GM12878 (cell line): ENCODE measurements at regions of chr12 and their contacts with region 1.

Region 1: GRCh38 chr12:40446385-40446784 is 221.6 kb downstream of the LRRK2 start:
- DNase-seq: no peak
- ATAC-seq: peak; percentile 76
- H3K4me3 ChIP-seq: no peak overlapping the region
- H3K27ac ChIP-seq: no peak overlapping the region
- H3K4me1 ChIP-seq: no peaks in the 10 kb centered on the region
- H3K27me3 ChIP-seq: no peaks in the 10 kb centered on the region
- CTCF ChIP-seq: peak; percentile 44 to 57 (median 48); a peak in 4 of 6 replicates
- EP300 ChIP-seq: no peak
- POLR2A ChIP-seq: no peak
- RAD21 ChIP-seq: peak; percentile 60

Region 2: DNA sequence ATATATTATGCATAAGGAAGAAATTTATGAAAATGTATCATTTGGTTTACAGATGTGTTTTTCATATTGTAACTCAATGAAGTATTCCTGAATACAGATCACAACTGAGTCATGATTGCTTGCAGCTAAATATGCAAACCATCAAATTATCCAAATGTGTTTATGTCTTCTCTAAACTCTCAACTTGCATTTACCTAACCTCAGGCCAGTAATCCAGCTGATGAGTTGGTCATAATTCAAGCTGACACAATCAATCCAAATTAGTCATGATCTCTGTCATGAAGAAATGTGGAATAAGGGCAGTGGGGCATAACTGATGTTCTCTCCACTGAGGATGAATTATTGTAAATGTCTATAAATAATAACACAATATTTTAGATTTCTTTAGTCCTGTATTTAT is 141.0 kb after region 1 on chr12:
- CTCF ChIA-PET with region 1: no interaction called
- POLR2A ChIA-PET with region 1: no interaction called
- RAD21 ChIA-PET with region 1: no interaction called
- SMC1A ChIA-PET with region 1: no interaction called
- in situ Hi-C with region 1: no loop called
- intact Hi-C with region 1: loop called (anchors 10 kb)
- DNase-seq: no peak
- ATAC-seq: no peak
- H3K4me3 ChIP-seq: no peak overlapping the region
- H3K27ac ChIP-seq: no peak overlapping the region
- H3K4me1 ChIP-seq: no peaks in the 10 kb centered on the region
- H3K27me3 ChIP-seq: no peaks in the 10 kb centered on the region
- CTCF ChIP-seq: no peak
- EP300 ChIP-seq: no peak
- POLR2A ChIP-seq: no peak
- RAD21 ChIP-seq: no peak

Region 3: GRCh38 chr12:40614923-40615322 is 168.5 kb after region 1 on chr12:
- CTCF ChIA-PET with region 1: interaction called, 20 read pairs
- POLR2A ChIA-PET with region 1: no interaction called
- RAD21 ChIA-PET with region 1: interaction called, 11 read pairs
- SMC1A ChIA-PET with region 1: interaction called, 10 read pairs
- in situ Hi-C with region 1: no loop called
- intact Hi-C with region 1: no loop called
- DNase-seq: peak; percentile 11
- ATAC-seq: peak; percentile 86
- H3K4me3 ChIP-seq: no peak overlapping the region
- H3K27ac ChIP-seq: no peak overlapping the region
- H3K4me1 ChIP-seq: peaks cover 7% of the 10 kb centered on the region
- H3K27me3 ChIP-seq: no peaks in the 10 kb centered on the region
- CTCF ChIP-seq: no peak
- EP300 ChIP-seq: 0 out of 4 replicates have a peak, but pooled peaks of 1 of the 2 experiments have one; percentile 18
- POLR2A ChIP-seq: no peak
- RAD21 ChIP-seq: 0 out of 2 replicates have a peak, but pooled peaks have one; percentile 9

Region 4: DNA sequence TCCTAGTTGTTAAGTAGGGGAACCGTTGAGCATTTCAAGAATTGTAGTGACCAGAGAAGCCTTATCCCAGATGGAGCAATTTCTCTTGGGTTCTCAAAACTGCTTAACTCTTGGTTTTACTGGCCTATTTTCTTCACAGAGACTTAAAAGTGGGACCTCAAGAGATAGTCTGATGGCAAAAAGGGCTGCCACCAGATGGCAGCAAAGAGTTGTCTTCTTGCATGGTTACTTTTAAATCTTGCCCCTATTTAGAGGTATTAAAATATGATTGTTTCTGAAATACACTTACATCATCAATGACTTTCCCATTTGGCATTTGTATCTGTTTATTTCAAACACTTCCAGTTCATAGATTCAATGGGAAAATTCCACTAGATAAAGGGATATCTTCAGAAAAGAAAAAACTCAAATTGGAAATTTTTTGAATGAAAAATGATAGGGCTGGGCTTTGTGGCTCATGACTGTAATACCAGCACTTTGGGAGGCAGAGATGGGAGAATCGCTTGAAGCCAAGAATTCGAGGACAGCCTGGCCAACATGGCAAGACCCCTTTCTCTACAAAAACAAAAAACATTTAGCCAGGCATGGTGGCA is 176.0 kb after region 1 on chr12:
- CTCF ChIA-PET with region 1: interaction called, 20 read pairs
- POLR2A ChIA-PET with region 1: no interaction called
- RAD21 ChIA-PET with region 1: interaction called, 11 read pairs
- SMC1A ChIA-PET with region 1: interaction called, 10 read pairs
- in situ Hi-C with region 1: no loop called
- intact Hi-C with region 1: no loop called
- DNase-seq: no peak
- ATAC-seq: peak; percentile 82
- H3K4me3 ChIP-seq: no peak overlapping the region
- H3K27ac ChIP-seq: no peak overlapping the region
- H3K4me1 ChIP-seq: no peaks in the 10 kb centered on the region
- H3K27me3 ChIP-seq: no peaks in the 10 kb centered on the region
- CTCF ChIP-seq: peak; percentile 66 to 82 (median 71)
- EP300 ChIP-seq: no peak
- POLR2A ChIP-seq: no peak
- RAD21 ChIP-seq: peak; percentile 77

Region 5: GRCh38 chr12:40911676-40912075 is 465.3 kb after region 1 on chr12:
- CTCF ChIA-PET with region 1: no interaction called
- POLR2A ChIA-PET with region 1: no interaction called
- RAD21 ChIA-PET with region 1: no interaction called
- SMC1A ChIA-PET with region 1: no interaction called
- in situ Hi-C with region 1: loop called (anchors 10 kb)
- intact Hi-C with region 1: no loop called
- DNase-seq: no peak
- ATAC-seq: no peak
- H3K4me3 ChIP-seq: no peak overlapping the region
- H3K27ac ChIP-seq: no peak overlapping the region
- H3K4me1 ChIP-seq: no peaks in the 10 kb centered on the region; the same call in 1 of the 2 replicates
- H3K27me3 ChIP-seq: no peaks in the 10 kb centered on the region
- CTCF ChIP-seq: no peak
- EP300 ChIP-seq: no peak
- POLR2A ChIP-seq: no peak
- RAD21 ChIP-seq: no peak

Region 6: GRCh38 chr12:40921563-40922163 is 475.3 kb after region 1 on chr12:
- CTCF ChIA-PET with region 1: interaction called, 3 read pairs
- POLR2A ChIA-PET with region 1: interaction called, 5 read pairs
- RAD21 ChIA-PET with region 1: no interaction called
- SMC1A ChIA-PET with region 1: interaction called, 3 read pairs
- in situ Hi-C with region 1: loop called (anchors 10 kb)
- intact Hi-C with region 1: loop called (anchors 5 kb)
- DNase-seq: no peak
- ATAC-seq: peak; percentile 49; the same call in 2 of the 3 replicates
- H3K4me3 ChIP-seq: no peak overlapping the region
- H3K27ac ChIP-seq: no peak overlapping the region
- H3K4me1 ChIP-seq: no peaks in the 10 kb centered on the region
- H3K27me3 ChIP-seq: no peaks in the 10 kb centered on the region
- CTCF ChIP-seq: peak; percentile 34 to 60 (median 53); a peak in 5 of 6 replicates
- EP300 ChIP-seq: no peak
- POLR2A ChIP-seq: no peak
- RAD21 ChIP-seq: peak; percentile 73